ENCODE measurements at regions of chr2 and their contacts with region 1.

Region 1: DNA sequence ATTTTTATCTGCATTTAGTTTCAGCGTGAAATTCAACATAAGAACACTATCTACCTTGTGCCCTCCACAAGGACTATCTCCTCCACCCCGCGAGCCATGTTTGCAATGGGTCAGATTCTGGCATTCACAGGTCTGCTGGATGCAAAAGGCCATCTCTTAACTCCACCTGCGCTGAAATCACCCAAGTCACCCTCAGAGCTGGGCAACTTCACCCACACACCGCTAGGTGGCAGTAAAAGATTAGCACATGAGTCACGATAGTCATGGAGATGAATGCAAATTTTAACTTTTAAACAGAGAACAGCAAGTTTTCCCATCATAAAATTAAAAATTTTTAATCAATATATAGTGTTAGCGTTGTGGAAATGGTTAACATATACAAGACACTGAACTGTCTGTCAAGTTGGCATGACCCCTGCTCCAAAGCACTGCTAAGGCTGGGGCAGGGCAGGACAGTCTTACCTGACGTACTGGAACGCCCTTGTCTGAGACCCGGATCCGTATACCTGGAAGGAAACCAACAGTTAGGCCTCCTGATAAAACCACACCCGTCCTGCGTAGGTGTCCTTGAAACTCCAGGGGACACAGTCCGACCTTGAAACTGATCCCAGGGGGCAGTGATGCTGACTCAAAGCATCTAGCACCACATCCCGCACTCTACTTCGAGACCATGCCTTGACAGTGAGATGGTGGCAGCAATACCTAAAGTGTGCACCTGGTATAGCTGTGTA is 89.6 kb downstream of the UXS1 start:
- DNase-seq: no peak
- H3K4me3 ChIP-seq: no peak overlapping the region
- H3K27ac ChIP-seq: no peak overlapping the region
- H3K4me1 ChIP-seq: peaks cover 0 to 14% (median 0%) of the 10 kb centered on the region in 6 donors
- H3K27me3 ChIP-seq: no peaks in the 10 kb centered on the region
- CTCF ChIP-seq: peak; percentile 77 to 94 (median 91)
- POLR2A ChIP-seq: no peak

Region 2: DNA sequence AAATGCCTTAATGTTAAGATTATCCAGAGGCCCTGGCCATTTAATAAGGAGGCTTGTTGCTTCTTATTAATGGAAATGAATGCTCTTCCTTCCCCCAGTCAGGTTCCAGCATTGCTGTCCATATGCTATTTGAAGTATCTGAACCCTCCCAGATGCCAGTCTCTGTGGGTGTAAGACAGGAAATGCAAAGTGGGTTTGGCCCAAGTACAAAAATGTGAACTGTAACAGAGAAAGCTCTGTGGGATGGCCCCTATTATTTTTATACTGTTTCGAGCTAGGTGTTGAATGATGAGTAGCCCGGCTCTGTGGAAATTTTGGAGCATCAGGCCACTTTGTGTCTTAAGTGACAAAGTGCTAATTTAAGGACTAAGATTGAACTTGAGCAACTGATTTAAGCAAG is 51.4 kb before region 1 on chr2:
- intact Hi-C with region 1: no loop called
- DNase-seq: no peak
- H3K4me3 ChIP-seq: no peak overlapping the region
- H3K27ac ChIP-seq: no peak overlapping the region
- H3K4me1 ChIP-seq: peaks cover 0 to 15% (median 10%) of the 10 kb centered on the region in 6 donors
- H3K27me3 ChIP-seq: no peaks in the 10 kb centered on the region
- CTCF ChIP-seq: no peak
- POLR2A ChIP-seq: no peak

Region 3: DNA sequence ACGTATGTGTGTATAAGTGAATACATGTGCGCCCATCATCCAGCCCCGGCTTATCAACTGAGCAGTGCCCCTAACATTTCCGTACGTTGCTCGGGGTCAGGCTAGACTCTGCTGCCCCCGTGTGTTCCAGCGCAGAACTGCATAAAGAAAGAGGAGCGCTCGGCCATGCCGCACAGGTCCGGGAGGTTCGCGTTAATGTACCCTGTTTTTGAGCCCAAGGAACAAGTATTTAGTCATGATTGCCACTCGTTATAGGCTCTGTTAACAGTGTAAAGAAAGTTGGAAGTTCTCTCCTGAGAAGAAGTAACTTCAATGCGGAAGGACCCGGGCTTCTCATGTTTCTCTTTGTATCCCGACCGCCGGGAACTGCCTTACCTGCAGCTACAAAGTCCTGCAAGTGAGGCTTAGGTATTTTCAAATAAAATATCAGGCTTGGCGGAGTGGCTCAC is 438.3 kb after region 1 on chr2:
- intact Hi-C with region 1: loop called (anchors 5 kb)
- DNase-seq: peak; percentile 87
- H3K4me3 ChIP-seq: peak overlapping the region in 2 of 8 donors; percentile 9 to 43
- H3K27ac ChIP-seq: no peak overlapping the region
- H3K4me1 ChIP-seq: peaks cover 0 to 23% (median 11%) of the 10 kb centered on the region in 6 donors
- H3K27me3 ChIP-seq: peaks cover 0 to 32% (median 7%) of the 10 kb centered on the region in 7 donors
- CTCF ChIP-seq: peak; percentile 67 to 93 (median 91)
- POLR2A ChIP-seq: no peak

Region 4: DNA sequence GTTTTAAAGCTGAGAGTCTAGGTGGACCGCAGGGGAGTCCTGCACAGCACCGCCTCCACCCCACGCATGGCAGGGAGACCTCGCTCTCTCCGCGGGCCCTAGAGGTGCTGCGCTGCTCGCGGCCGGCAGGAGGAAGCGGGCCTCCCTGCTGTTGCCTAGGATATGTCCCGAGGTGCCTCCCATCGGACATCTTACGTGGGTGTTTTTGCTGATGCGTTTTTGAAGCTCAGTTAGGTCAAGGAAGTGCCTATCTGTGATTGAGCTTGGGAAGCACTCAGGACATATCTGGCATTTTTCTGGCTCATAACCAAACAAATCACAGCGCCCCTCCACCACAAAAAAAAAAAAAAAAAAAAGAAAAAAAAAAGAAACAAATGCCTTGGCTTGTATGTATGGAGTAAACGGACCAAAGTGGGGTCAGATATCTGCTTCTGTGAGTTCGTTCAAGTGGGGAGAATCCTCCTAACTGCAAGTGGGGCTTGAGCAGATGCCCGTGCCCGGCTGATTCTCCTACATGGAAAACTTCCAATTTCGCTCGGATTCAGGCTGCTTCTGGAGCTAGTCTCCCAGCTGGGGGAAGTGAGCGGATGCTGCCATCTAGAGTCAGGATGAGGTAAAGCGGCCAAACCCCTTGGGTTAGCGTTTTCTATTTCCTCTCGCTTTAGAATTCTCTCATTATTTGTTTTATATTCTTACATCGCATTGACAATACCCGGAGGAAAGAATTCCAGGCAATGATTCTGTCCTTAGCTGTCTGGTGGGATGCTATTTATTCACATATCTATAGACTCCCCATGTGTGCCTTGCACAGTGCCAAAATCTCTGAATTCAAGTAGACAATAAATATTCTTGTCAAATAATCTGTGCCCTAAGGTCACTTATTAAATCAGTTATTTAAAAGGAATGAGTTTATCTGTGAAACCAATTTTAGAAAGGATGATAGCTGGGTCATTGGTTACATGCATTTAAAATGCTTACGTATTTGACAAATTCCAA is 477.9 kb after region 1 on chr2:
- intact Hi-C with region 1: loop called (anchors 10 kb)
- DNase-seq: peak; percentile 81
- H3K4me3 ChIP-seq: peak overlapping the region; percentile 13 to 65 (median 24)
- H3K27ac ChIP-seq: peak overlapping the region in 2 of 8 donors; percentile 38 to 47
- H3K4me1 ChIP-seq: peaks cover 8 to 45% (median 26%) of the 10 kb centered on the region in 6 donors
- H3K27me3 ChIP-seq: peaks cover 0 to 66% (median 25%) of the 10 kb centered on the region in 7 donors
- CTCF ChIP-seq: peak; percentile 45 to 85 (median 77)
- POLR2A ChIP-seq: no peak